Activated CD4-positive, alpha-beta T cell treated with anti-CD3 and anti-CD28 coated beads for 36 hours (primary cell): ENCODE measurements at regions of chr6 and their contacts with region 1.

Region 1: GRCh38 chr6:96626759-96627364 is 63.9 kb downstream of the FHL5 start:
- DNase-seq: no peak
- ATAC-seq: peak; percentile 44
- H3K4me3 Mint-ChIP-seq: no peak overlapping the region
- H3K27ac Mint-ChIP-seq: no peak overlapping the region
- H3K4me1 Mint-ChIP-seq: no peaks in the 10 kb centered on the region
- H3K27me3 Mint-ChIP-seq: peaks cover 12% of the 10 kb centered on the region

Region 2: GRCh38 chr6:96450082-96450769 is 176.6 kb before region 1 on chr6:
- CTCF ChIA-PET with region 1: no interaction called
- POLR2A ChIA-PET with region 1: no interaction called
- intact Hi-C with region 1: no loop called
- DNase-seq: no peak
- ATAC-seq: no peak
- H3K4me3 Mint-ChIP-seq: no peak overlapping the region
- H3K27ac Mint-ChIP-seq: no peak overlapping the region
- H3K4me1 Mint-ChIP-seq: no peaks in the 10 kb centered on the region
- H3K27me3 Mint-ChIP-seq: no peaks in the 10 kb centered on the region

Region 3: DNA sequence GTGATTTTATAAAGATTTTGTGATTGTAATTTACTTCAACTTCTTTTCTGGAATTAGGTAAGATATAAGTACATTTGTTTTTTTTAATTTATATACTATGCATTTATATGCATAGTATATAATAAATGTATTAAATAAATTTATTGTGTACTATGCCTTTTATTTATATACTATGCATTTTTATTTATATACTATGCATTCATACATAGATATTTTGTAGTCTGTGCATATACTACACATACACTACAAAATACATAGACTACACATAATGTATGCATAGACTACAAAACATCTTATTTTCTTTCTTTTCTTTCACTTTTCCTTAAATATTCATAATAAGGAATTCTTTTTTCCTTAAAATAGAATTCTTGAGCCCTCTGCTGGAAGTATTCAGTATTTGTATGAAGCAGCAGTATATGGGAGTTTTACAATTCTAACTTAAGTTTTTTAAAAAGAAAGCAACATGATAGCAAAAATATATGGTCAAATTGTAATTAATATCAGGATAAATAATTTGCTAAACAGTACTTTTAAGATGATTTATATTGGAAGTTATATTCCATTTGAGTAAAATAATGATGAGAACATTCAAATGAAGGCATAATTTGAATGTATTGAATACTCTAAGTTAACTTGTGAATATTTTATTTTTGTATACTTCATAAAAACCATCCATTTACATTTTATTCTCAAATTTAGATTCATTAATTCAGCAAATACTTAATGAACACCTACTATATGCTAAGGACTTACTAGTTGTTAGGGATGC is 427.0 kb after region 1 on chr6:
- CTCF ChIA-PET with region 1: interaction called, 30 read pairs
- POLR2A ChIA-PET with region 1: interaction called, 3 read pairs
- intact Hi-C with region 1: loop called (anchors 1 kb)
- DNase-seq: no peak
- ATAC-seq: no peak
- H3K4me3 Mint-ChIP-seq: no peak overlapping the region
- H3K27ac Mint-ChIP-seq: no peak overlapping the region
- H3K4me1 Mint-ChIP-seq: peaks cover 15% of the 10 kb centered on the region
- H3K27me3 Mint-ChIP-seq: no peaks in the 10 kb centered on the region

Region 4: GRCh38 chr6:97059473-97059872 is 432.6 kb after region 1 on chr6:
- CTCF ChIA-PET with region 1: interaction called, 30 read pairs
- POLR2A ChIA-PET with region 1: no interaction called
- intact Hi-C with region 1: loop called (anchors 1 kb)
- DNase-seq: no peak
- ATAC-seq: peak; percentile 73
- H3K4me3 Mint-ChIP-seq: no peak overlapping the region
- H3K27ac Mint-ChIP-seq: no peak overlapping the region
- H3K4me1 Mint-ChIP-seq: peaks cover 2% of the 10 kb centered on the region
- H3K27me3 Mint-ChIP-seq: no peaks in the 10 kb centered on the region

Region 5: GRCh38 chr6:97394160-97394748 is 767.4 kb after region 1 on chr6:
- CTCF ChIA-PET with region 1: no interaction called
- POLR2A ChIA-PET with region 1: no interaction called
- intact Hi-C with region 1: loop called in 1 of 2 experiments (anchors 10 kb)
- DNase-seq: peak; percentile 58
- ATAC-seq: peak; percentile 70
- H3K4me3 Mint-ChIP-seq: no peak overlapping the region
- H3K27ac Mint-ChIP-seq: no peak overlapping the region
- H3K4me1 Mint-ChIP-seq: no peaks in the 10 kb centered on the region
- H3K27me3 Mint-ChIP-seq: peaks cover 10% of the 10 kb centered on the region